ENCODE measurements at regions of chr4 and their contacts with region 1.

Region 1: DNA sequence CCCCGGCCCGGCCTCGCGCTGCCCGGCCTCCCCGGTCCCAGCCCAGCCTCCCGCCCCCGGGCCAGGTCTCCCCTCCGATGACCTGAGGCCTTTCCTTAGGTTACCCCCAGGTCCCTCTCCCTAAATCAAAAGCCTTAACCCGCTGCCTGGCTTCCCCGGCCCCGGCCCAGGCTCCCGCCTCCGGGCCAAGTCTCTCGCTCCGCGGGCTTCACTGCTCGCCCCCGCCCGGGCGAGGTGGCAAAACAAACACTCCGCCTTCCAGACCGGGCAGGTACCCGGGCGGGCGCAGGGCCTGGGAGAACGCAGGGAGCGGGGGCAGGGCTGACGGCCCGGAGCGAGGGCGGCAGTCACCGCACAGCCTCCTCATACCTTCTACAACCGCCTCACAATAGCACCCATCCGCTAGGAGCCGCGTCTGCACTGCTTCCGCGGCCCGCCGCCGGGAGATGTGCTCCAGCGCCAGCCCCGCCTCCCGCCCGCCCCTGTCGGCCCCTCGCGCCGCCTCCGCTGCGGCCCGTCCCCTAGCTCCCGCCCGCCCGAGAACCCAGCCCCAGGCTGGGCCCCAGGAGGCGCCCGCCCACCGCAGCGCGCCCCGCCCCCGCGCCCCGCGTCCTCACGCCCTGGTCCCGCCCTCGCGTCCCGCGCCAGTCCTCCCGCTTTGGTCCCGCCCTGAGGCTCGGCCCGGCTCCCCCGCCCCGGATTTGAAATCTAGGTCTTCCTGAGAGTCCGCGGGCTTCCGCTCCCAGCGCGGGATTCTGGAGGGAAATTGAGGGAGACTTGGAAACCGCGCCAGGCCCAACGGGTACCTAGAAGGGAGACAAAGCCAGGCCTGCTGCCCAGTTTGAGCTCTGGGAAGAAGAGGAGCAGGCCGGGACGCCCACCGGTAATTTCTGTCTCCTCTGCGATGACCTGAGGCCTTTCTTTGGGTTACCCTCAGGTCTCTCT is at the starts of genes CASP3 and PRIMPOL:
- DNase-seq: peak; percentile 96
- H3K4me3 Mint-ChIP-seq: peak within 1 kb of the TSS; percentile 95
- H3K27ac Mint-ChIP-seq: peak within 1 kb of the TSS; percentile 91
- H3K4me1 Mint-ChIP-seq: peaks cover 59% of the 10 kb centered on the region
- H3K27me3 Mint-ChIP-seq: no peaks in the 10 kb centered on the region
- total RNA-seq, gene CASP3: 116 and 121 TPM in 2 replicates
- total RNA-seq, gene PRIMPOL: 16.4 and 19.7 TPM in 2 replicates

Region 2: GRCh38 chr4:184263910-184264732 is 385.2 kb before region 1 on chr4:
- intact Hi-C with region 1: loop called (anchors 1 kb)
- DNase-seq: peak; percentile 86
- H3K4me3 Mint-ChIP-seq: peak overlapping the region; percentile 1
- H3K27ac Mint-ChIP-seq: peak overlapping the region; percentile 60
- H3K4me1 Mint-ChIP-seq: peaks cover 59% of the 10 kb centered on the region
- H3K27me3 Mint-ChIP-seq: peaks cover 2% of the 10 kb centered on the region

Region 3: GRCh38 chr4:184514121-184514988 is 134.9 kb before region 1 on chr4:
- intact Hi-C with region 1: loop called (anchors 1 kb)
- DNase-seq: peak; percentile 56
- H3K4me3 Mint-ChIP-seq: peak overlapping the region; percentile 46
- H3K27ac Mint-ChIP-seq: peak overlapping the region; percentile 93
- H3K4me1 Mint-ChIP-seq: peaks cover 56% of the 10 kb centered on the region
- H3K27me3 Mint-ChIP-seq: no peaks in the 10 kb centered on the region

Region 4: DNA sequence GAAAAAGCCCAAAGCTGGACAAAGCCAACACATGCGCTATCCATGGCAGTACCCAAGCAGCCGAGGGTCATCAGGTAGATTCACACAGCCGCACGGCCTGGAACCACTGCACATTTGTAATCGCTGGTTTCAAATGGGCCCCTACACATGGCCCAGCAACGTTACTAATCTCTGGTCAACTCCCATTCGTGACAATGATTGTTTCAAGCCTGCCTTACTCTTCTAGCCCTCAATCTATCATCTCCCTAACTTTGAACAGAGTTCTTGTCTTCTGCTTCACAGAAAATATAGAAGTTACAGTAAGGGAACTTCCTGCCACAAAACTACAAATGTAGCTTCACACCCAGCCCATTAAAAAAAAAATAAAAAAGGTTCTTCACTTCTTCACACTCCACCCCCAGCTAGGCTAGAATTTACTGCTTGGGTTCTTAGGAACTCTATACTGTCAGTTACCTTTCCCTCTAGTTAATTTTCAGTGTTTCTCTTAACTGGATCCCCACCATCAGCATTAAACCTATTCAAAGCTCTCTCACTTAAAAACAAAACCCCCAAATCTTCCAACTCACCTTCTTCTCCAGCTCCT is 24.2 kb before region 1 on chr4:
- intact Hi-C with region 1: loop called (anchors 2 kb)
- DNase-seq: no peak
- H3K4me3 Mint-ChIP-seq: peak overlapping the region; percentile 49
- H3K27ac Mint-ChIP-seq: peak overlapping the region; percentile 88
- H3K4me1 Mint-ChIP-seq: peaks cover 38% of the 10 kb centered on the region
- H3K27me3 Mint-ChIP-seq: no peaks in the 10 kb centered on the region

Region 5: GRCh38 chr4:184635381-184635780 is 13.9 kb before region 1 on chr4:
- intact Hi-C with region 1: no loop called
- DNase-seq: no peak
- H3K4me3 Mint-ChIP-seq: no peak overlapping the region
- H3K27ac Mint-ChIP-seq: no peak overlapping the region
- H3K4me1 Mint-ChIP-seq: peaks cover 40% of the 10 kb centered on the region
- H3K27me3 Mint-ChIP-seq: no peaks in the 10 kb centered on the region

Region 6: GRCh38 chr4:184762100-184762499 is 112.8 kb after region 1 on chr4:
- intact Hi-C with region 1: loop called (anchors 1 kb)
- DNase-seq: peak; percentile 59
- H3K4me3 Mint-ChIP-seq: peak overlapping the region; percentile 16
- H3K27ac Mint-ChIP-seq: peak overlapping the region; percentile 85
- H3K4me1 Mint-ChIP-seq: peaks cover 33% of the 10 kb centered on the region
- H3K27me3 Mint-ChIP-seq: no peaks in the 10 kb centered on the region

Region 7: GRCh38 chr4:185235843-185236503 is 586.7 kb after region 1 on chr4:
- intact Hi-C with region 1: no loop called
- DNase-seq: no peak
- H3K4me3 Mint-ChIP-seq: no peak overlapping the region
- H3K27ac Mint-ChIP-seq: no peak overlapping the region
- H3K4me1 Mint-ChIP-seq: peaks cover 17% of the 10 kb centered on the region
- H3K27me3 Mint-ChIP-seq: no peaks in the 10 kb centered on the region

Region 8: GRCh38 chr4:185395956-185396723 is 746.8 kb after region 1 on chr4:
- intact Hi-C with region 1: loop called (anchors 1 kb)
- DNase-seq: peak; percentile 98
- H3K4me3 Mint-ChIP-seq: peak overlapping the region; percentile 94
- H3K27ac Mint-ChIP-seq: peak overlapping the region; percentile 97
- H3K4me1 Mint-ChIP-seq: peaks cover 69% of the 10 kb centered on the region
- H3K27me3 Mint-ChIP-seq: peaks cover 2% of the 10 kb centered on the region

Measured in activated T-helper 1 cell treated with anti-CD3 and anti-CD28 coated beads, Interleukin-12 subunit alpha, Interleukin-12 subunit beta, Interleukin-2, Interleukin-4 antibody, amounts not matched to agents 30 ng/mL and 10 ng/mL and 1 ng/mL, durations not matched to agents 14 hours and 24 hours and 36 hours (primary cell).